IMR-90 (cell line): ENCODE measurements at regions of chr22 and their contacts with region 1.

Region 1: GRCh38 chr22:31313366-31314147 is 21.3 kb upstream of the PIK3IP1 start:
- DNase-seq: peak; percentile 61
- ATAC-seq: peak; percentile 97
- H3K4me3 ChIP-seq: no peak overlapping the region
- H3K27ac ChIP-seq: peak overlapping the region; percentile 0; the same call in 1 of the 2 replicates
- H3K4me1 ChIP-seq: peaks cover 3% of the 10 kb centered on the region; the same call in 1 of the 2 replicates
- H3K27me3 ChIP-seq: no peaks in the 10 kb centered on the region
- CTCF ChIP-seq: peak; percentile 77
- POLR2A ChIP-seq: no peak
- RAD21 ChIP-seq: peak; percentile 46

Region 2: DNA sequence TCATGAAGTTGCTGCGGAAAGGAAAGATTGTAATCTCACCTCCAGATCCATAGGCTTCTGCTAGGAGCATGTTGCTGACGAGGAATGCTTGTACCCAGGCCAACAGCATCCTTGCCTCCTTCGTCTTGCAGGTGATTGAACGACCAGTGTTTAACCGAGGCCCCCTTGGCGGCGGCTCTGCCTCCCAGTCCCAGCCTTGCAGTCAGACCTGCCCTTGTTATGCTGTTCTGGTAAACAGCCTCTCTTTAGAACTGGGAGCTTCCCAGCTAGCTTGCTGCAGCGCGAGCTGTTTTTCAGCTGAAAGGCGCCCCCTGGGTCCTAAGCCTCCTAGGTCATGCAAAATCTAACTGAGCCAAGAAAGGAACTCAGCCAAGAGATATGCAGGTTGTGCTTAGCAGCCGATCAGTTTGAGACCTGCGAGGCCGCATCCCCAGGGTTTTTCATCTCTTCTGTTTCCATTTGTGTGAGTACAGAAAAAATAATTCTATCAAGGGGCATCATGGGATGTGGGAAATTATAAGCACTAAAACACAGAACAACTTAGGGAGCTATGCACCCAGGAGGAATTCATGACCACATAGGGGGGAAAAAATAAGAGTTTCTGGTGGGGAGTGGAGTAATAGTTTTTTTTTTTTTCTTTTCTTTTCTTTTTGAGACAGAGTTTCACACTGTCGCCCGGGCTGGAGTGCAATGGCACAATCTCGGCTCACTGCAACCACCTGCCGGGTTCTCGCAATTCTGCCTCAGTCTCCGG is 21.1 kb before region 1 on chr22 and contains the start of gene PIK3IP1:
- CTCF ChIA-PET with region 1: interaction called, 24 read pairs
- POLR2A ChIA-PET with region 1: no interaction called
- dilution Hi-C with region 1: no loop called
- in situ Hi-C with region 1: no loop called
- intact Hi-C with region 1: no loop called
- DNase-seq: peak; percentile 91
- ATAC-seq: peak; percentile 73
- H3K4me3 ChIP-seq: peak within 1 kb of the TSS; percentile 54
- H3K27ac ChIP-seq: peak within 1 kb of the TSS; percentile 69
- H3K4me1 ChIP-seq: peaks cover 9% of the 10 kb centered on the region; the same call in 1 of the 2 replicates
- H3K27me3 ChIP-seq: no peaks in the 10 kb centered on the region
- CTCF ChIP-seq: peak; percentile 51
- POLR2A ChIP-seq: peak; percentile 71; the same call in 1 of the 2 replicates
- RAD21 ChIP-seq: peak; percentile 40
- total RNA-seq, gene PIK3IP1: 12.9 and 13.3 TPM in 2 replicates

Region 3: DNA sequence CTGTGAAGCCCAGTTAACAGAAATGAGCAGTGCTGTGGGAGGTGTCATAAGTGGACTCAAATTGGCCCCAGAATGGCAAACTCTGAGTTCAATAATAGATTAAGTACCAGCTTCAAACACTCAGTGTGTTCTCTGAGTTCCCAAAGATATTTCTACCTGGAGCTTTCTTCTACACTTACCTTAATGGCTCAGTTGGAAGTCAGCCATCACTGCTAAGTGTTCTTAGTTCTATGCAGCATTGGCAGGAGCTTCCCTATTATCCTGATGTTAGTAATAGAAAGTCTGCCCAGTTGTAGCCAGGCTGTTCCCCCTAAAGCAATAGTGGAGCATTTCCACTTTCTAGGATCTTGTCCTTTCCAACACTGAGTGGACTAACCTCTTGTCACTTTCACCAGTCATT is 11.6 kb before region 1 on chr22:
- CTCF ChIA-PET with region 1: interaction called, 24 read pairs
- POLR2A ChIA-PET with region 1: no interaction called
- dilution Hi-C with region 1: no loop called
- in situ Hi-C with region 1: no loop called
- intact Hi-C with region 1: no loop called
- DNase-seq: no peak
- ATAC-seq: no peak
- H3K4me3 ChIP-seq: no peak overlapping the region
- H3K27ac ChIP-seq: no peak overlapping the region
- H3K4me1 ChIP-seq: no peaks in the 10 kb centered on the region
- H3K27me3 ChIP-seq: no peaks in the 10 kb centered on the region
- CTCF ChIP-seq: no peak
- POLR2A ChIP-seq: no peak
- RAD21 ChIP-seq: no peak